Gastrocnemius medialis (tissue), 4 donors: ENCODE measurements at regions of chr3 and their contacts with region 1.

Region 1: DNA sequence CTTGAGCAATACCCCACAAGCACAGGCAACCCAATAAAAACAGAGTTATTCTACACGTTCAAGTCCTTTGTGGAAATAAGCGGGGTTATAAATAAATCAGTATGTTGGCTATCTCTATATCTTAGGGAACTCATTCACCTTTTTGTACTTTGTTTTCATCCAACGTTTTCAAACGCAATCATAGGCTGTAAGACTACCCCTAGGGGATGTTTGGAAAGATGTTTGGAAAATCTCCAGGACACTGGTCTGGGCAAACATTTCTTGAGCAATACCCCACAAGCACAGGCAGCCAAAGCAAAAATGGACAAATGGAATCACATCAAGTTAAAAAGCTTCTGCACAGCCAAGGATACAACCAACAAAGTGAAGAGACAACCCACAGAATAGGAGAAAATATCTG is 70.1 kb downstream of the CLDN11 start:
- DNase-seq: peak in 1 of 2 donors; percentile 18
- ATAC-seq: peak in 1 of 2 donors; percentile 56
- H3K4me3 ChIP-seq: no peak overlapping the region
- H3K27ac ChIP-seq: no peak overlapping the region
- H3K4me1 ChIP-seq: no peaks in the 10 kb centered on the region
- H3K27me3 ChIP-seq: no peaks in the 10 kb centered on the region
- CTCF ChIP-seq: no peak
- POLR2A ChIP-seq: no peak

Region 2: DNA sequence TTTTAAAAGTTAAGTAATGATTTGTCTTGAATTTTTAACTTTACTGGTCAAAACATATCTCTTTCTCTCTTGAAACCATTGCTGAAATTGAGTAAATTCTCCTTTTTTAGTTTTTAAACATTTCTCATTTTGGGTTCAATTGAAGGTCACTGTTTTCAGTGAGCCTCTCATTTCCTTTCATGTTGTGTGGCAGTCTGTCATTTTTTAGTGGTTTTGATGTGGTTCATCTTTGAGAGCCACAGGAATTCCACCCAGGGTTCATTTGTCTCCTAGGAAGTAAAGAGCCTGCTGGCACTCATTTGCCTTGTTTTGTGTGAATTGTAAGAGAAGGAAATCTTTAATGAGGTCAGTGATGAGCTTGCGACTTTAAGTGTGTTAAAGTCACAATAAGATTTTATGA is 59.7 kb before region 1 on chr3:
- in situ Hi-C with region 1: no loop called
- intact Hi-C with region 1: no loop called
- DNase-seq: no peak
- ATAC-seq: no peak
- H3K4me3 ChIP-seq: no peak overlapping the region
- H3K27ac ChIP-seq: no peak overlapping the region
- H3K4me1 ChIP-seq: no peaks in the 10 kb centered on the region
- H3K27me3 ChIP-seq: no peaks in the 10 kb centered on the region
- CTCF ChIP-seq: no peak
- POLR2A ChIP-seq: no peak

Region 3: DNA sequence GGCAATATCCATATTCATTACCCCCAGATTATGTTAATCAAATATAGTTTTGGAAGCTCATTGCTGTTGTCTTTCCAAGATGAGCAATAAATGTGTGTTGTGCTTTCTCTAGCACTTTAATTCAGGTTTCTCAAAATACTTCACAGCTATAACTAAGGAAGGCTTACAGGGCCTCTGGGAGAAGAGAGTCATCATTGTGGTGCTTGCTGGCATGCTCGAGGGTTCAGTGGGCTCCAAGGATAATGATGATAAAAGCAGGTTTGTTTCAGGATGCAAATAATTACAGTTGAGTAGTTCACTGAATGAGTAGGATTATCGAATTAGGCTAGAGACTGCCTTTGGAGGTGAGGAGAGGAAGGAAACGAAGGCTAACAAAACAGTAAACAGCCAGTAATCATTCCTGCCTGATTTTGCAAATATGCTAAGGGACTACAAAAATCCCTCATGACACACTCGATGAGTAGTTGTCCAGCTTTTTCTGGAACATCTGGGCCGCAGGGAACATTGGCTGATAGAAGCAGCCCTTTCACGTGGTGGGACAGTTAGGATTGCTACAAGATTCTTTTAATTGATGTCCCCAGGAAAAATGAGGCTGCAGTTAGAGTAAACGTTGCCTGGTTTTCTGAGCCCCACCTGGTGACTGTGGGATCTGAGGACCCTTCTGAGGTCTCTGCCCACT is 43.0 kb after region 1 on chr3:
- in situ Hi-C with region 1: no loop called
- intact Hi-C with region 1: loop called (anchors 5 kb)
- DNase-seq: peak; percentile 41 to 49
- ATAC-seq: peak; percentile 68 to 73
- H3K4me3 ChIP-seq: no peak overlapping the region
- H3K27ac ChIP-seq: peak overlapping the region; percentile 13 to 52 (median 40)
- H3K4me1 ChIP-seq: peaks cover 2% of the 10 kb centered on the region in 2 donors
- H3K27me3 ChIP-seq: no peaks in the 10 kb centered on the region
- CTCF ChIP-seq: no peak
- POLR2A ChIP-seq: no peak